ENCODE measurements at regions of chr5 and their contacts with region 1.

Region 1: DNA sequence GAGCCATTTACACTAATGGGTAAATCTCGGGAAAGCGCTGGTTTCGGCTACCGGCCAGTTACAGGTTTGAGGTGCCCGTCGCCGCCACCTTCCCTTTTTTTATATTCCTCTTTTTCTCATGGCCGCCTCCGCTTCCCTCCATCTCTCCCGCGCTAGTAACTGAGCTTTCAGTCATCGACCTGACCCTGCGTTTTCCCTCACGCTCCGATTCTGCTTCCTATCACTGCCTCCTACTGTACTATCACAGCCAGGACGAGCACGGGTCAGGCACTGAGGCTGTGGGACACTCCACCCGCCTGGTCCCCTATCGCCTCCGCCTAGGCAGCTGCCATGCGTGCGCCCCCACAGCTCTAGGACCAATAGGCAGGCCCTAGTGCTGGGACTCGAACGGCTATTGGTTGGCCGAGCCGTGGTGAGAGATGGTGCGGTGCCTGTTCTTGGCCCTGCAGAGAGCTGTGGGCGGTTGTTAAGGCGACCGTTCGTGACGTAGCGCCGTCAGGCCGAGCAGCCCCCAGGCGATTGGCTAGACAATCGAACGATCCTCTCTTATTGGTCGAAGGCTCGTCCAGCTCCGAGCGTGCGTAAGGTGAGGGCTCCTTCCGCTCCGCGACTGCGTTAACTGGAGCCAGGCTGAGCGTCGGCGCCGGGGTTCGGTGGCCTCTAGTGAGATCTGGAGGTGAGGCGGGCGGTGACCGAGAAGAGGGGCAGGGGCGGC is at the start of gene HMGCR:
- DNase-seq: peak; percentile 100
- ATAC-seq: peak; percentile 97
- H3K4me3 ChIP-seq: peak within 1 kb of the TSS; percentile 79
- H3K27ac ChIP-seq: peak within 1 kb of the TSS; percentile 29
- H3K4me1 ChIP-seq: no peaks in the 10 kb centered on the region; the same call in 1 of the 2 replicates
- H3K27me3 ChIP-seq: no peaks in the 10 kb centered on the region
- CTCF ChIP-seq: peak; percentile 38
- POLR2A ChIP-seq: peak; percentile 92
- RAD21 ChIP-seq: peak; percentile 39
- total RNA-seq, gene HMGCR: 48.6 and 89.7 TPM in 2 replicates

Region 2: DNA sequence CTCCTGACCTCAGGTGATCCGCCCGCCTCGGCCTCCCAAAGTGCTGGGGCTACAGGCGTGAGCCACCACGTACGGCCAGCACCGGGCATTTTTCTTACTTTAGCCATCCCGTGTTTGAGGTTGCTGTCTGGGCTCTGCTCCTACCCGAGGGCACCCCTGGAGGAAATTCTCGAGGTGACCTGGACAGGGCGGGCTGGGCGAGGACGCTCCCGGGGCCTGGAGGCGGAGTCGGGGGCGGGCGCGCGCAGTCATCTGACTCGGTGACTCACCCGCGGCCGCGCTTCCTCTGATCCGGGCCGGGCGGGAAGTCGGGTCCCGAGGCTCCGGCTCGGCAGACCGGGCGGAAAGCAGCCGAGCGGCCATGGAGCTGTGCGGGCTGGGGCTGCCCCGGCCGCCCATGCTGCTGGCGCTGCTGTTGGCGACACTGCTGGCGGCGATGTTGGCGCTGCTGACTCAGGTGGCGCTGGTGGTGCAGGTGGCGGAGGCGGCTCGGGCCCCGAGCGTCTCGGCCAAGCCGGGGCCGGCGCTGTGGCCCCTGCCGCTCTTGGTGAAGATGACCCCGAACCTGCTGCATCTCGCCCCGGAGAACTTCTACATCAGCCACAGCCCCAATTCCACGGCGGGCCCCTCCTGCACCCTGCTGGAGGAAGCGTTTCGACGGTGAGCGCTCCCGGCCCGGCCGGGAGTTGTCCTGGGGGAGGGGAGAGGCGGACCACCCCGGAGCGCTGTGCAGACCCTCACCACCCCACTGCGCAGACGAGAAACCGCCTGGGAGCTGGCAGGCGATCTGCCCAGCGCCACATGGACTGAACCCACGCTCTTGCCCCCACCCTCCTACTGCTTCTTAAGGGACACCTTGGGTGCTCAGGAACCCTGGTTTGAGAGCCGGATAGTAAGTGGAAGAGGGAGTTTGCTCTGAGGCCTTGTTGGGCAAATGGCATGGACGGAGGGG is 651.6 kb before region 1 on chr5 and contains the start of gene HEXB:
- CTCF ChIA-PET with region 1: no interaction called
- POLR2A ChIA-PET with region 1: no interaction called
- dilution Hi-C with region 1: no loop called
- in situ Hi-C with region 1: no loop called
- intact Hi-C with region 1: loop called (anchors 10 kb)
- DNase-seq: peak; percentile 76
- ATAC-seq: peak; percentile 94
- H3K4me3 ChIP-seq: peak within 1 kb of the TSS; percentile 90
- H3K27ac ChIP-seq: peak within 1 kb of the TSS; percentile 73
- H3K4me1 ChIP-seq: peaks cover 8% of the 10 kb centered on the region
- H3K27me3 ChIP-seq: no peaks in the 10 kb centered on the region
- CTCF ChIP-seq: 0 out of 2 replicates have a peak, but pooled peaks have one; percentile 4
- POLR2A ChIP-seq: peak; percentile 90
- RAD21 ChIP-seq: no peak
- total RNA-seq, gene HEXB: 76.7 and 132 TPM in 2 replicates

Region 3: GRCh38 chr5:74945561-74946165 is 391.1 kb before region 1 on chr5:
- CTCF ChIA-PET with region 1: no interaction called
- POLR2A ChIA-PET with region 1: no interaction called
- dilution Hi-C with region 1: no loop called
- in situ Hi-C with region 1: no loop called
- intact Hi-C with region 1: loop called (anchors 5 kb)
- DNase-seq: no peak
- ATAC-seq: no peak
- H3K4me3 ChIP-seq: no peak overlapping the region
- H3K27ac ChIP-seq: no peak overlapping the region
- H3K4me1 ChIP-seq: peaks cover 13% of the 10 kb centered on the region
- H3K27me3 ChIP-seq: no peaks in the 10 kb centered on the region
- CTCF ChIP-seq: no peak
- POLR2A ChIP-seq: no peak
- RAD21 ChIP-seq: no peak

Region 4: DNA sequence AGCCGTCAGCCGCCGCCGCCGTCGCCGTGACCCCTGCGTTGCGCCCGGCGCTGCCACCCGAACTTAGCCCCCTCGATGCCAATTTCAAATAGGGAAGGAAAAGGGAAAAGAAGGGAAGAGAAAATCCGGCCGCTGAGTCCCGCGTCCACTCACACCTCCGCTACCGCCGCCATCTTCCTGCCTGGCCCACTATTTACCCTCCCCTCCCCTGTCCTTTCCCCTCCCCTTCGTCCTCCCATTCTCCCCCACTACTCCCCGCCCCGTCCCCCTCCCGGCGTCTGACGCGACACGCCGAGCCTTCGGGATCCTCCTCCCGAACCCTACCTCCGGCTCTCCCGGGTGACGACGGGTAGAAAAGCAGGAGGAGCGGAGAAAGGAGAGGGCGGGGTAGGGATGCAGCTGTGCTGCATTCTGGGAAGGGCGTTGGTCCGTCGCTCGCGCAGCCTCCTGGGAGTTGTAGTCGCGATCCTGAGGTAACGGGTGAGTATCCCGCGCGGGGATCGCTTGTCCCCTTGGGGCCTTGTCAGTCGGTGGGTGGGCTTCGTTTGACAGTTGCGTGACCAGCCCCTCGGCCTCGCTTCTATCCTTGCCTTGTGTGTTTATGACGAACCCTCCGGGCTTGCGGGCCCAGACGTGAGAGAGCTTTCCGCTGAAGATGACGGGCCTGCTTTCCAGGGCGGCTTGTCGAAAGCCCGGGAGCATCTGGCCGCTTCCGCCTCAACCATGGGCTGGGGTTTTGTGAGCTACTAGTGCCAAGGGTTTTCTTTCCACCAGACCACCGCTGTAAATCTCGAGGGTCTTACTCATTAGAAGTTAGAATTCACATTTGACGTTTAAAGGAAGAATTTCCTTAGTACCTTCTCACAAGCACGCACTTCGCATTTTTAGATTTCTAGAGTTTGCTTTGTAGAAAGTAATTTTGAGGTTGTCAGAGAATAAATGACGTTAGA is 174.9 kb after region 1 on chr5 and contains the starts of genes CERT1 and POLK:
- CTCF ChIA-PET with region 1: no interaction called
- POLR2A ChIA-PET with region 1: no interaction called
- dilution Hi-C with region 1: no loop called
- in situ Hi-C with region 1: no loop called
- intact Hi-C with region 1: loop called (anchors 2 kb)
- DNase-seq: peak; percentile 98
- ATAC-seq: peak; percentile 97
- H3K4me3 ChIP-seq: peak within 1 kb of the TSS; percentile 88
- H3K27ac ChIP-seq: peak within 1 kb of the TSS; percentile 96
- H3K4me1 ChIP-seq: no peaks in the 10 kb centered on the region
- H3K27me3 ChIP-seq: no peaks in the 10 kb centered on the region
- CTCF ChIP-seq: no peak
- POLR2A ChIP-seq: peak; percentile 89
- RAD21 ChIP-seq: no peak
- total RNA-seq, gene CERT1: 7.2 and 10.3 TPM in 2 replicates
- total RNA-seq, gene POLK: 24.4 and 34.2 TPM in 2 replicates

Region 5: DNA sequence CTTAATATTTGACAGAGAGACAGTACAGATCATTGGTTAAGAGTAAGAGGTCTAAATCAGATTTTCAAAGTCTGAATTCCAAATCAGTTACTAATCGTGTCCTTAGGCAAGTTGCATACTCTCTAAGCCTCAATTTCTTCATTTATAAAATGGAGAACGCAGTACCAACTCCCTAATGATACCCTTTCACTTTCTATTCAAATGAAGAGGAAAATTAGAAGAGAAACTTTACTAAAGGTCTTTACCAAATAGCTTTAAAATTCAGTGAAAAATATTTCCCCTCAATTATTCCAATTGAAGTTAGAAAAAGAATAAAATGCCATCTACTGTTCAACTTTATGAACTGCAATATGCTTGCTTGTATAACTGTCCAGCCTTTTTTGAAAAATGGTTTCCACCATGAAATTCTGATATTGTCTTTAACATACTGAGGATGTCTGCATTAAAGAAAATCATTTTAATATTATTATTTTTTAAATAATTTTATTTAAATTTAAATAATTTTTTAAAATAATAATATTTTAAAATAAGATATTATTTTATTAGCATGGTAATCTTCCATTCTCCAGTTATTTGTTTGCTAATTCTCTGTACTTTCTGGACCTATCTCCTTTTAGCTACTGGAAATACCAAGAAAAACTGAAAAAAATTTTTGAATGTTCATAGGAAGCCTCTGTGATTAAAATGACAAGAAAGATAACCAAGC is 344.5 kb after region 1 on chr5:
- CTCF ChIA-PET with region 1: no interaction called
- POLR2A ChIA-PET with region 1: no interaction called
- dilution Hi-C with region 1: no loop called
- in situ Hi-C with region 1: no loop called
- intact Hi-C with region 1: loop called (anchors 5 kb)
- DNase-seq: peak; percentile 60
- ATAC-seq: peak; percentile 59
- H3K4me3 ChIP-seq: no peak overlapping the region
- H3K27ac ChIP-seq: no peak overlapping the region
- H3K4me1 ChIP-seq: peaks cover 3% of the 10 kb centered on the region
- H3K27me3 ChIP-seq: no peaks in the 10 kb centered on the region
- CTCF ChIP-seq: peak; percentile 66
- POLR2A ChIP-seq: no peak
- RAD21 ChIP-seq: peak; percentile 56

Measured in IMR-90 (cell line).